ENCODE measurements at regions of chr4 and their contacts with region 1.

Region 1: GRCh38 chr4:101419324-101420135 is 72.2 kb upstream of the PPP3CA start:
- DNase-seq: no peak
- H3K4me3 Mint-ChIP-seq: peak overlapping the region; percentile 1
- H3K27ac Mint-ChIP-seq: peak overlapping the region; percentile 0
- H3K4me1 Mint-ChIP-seq: peaks cover 46% of the 10 kb centered on the region
- H3K27me3 Mint-ChIP-seq: peaks cover 17% of the 10 kb centered on the region

Region 2: DNA sequence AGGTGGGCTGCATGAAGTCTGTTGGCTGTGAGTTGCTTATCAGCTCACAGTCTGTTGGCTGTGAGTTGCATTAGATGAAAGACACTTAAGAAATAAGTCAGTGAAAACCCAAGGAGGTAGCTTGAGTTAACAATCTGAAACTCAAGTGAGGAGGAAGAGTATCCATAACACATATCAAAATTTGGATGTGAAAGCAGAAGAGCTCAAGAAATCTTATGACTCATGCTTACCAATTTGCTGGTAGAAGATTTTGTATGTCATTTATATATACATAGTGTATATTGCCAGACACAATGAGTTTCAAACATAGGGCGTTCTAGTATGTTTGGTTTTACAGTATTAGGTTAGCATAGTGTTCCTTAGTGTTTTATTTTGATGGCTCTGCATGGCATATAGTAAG is 1336.7 kb before region 1 on chr4:
- intact Hi-C with region 1: loop called (anchors 2 kb)
- DNase-seq: no peak
- H3K4me3 Mint-ChIP-seq: no peak overlapping the region
- H3K27ac Mint-ChIP-seq: peak overlapping the region; percentile 68
- H3K4me1 Mint-ChIP-seq: peaks cover 26% of the 10 kb centered on the region
- H3K27me3 Mint-ChIP-seq: no peaks in the 10 kb centered on the region

Region 3: DNA sequence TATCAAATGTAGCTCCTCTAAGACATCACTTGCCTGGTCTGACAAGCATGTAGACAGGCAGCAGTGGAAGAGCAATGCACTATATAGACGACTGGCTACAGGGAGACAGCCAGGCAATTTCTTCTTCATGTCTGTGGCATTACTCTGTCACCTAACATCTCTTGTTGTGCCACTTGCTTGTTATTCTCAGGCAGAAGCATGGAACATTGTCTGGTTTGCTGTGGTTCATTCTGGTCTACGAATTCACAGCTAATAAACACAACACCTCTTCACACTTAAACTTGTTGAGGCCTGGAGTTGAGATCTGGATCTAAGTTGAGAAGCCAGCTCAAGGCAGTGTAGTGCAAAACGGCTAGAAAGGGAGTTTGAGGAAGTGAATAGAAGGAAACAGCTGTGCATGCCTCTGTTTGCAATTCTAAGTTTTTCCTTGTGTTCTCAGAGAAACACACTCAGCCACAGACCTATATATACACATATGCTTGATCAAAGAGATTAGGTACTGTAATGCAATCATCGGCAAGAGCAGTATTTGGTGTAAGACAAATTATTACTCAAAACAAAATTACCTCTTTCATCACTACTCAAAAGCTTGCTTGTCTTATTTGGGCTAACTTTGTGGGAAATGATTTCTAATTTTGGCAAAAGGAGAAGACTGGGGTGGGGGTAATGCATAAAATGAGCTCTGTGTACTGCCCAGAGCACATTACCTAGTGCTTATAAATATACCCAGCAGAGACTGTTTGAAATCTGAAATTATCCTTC is 316.0 kb before region 1 on chr4:
- intact Hi-C with region 1: loop called (anchors 5 kb)
- DNase-seq: no peak
- H3K4me3 Mint-ChIP-seq: peak overlapping the region; percentile 11
- H3K27ac Mint-ChIP-seq: peak overlapping the region; percentile 52
- H3K4me1 Mint-ChIP-seq: peaks cover 25% of the 10 kb centered on the region
- H3K27me3 Mint-ChIP-seq: no peaks in the 10 kb centered on the region

Region 4: GRCh38 chr4:101205916-101206315 is 213.6 kb before region 1 on chr4:
- intact Hi-C with region 1: loop called (anchors 1 kb)
- DNase-seq: peak; percentile 46
- H3K4me3 Mint-ChIP-seq: no peak overlapping the region
- H3K27ac Mint-ChIP-seq: peak overlapping the region; percentile 42
- H3K4me1 Mint-ChIP-seq: peaks cover 30% of the 10 kb centered on the region
- H3K27me3 Mint-ChIP-seq: peaks cover 2% of the 10 kb centered on the region

Region 5: GRCh38 chr4:101328063-101328602 is 91.4 kb before region 1 on chr4:
- intact Hi-C with region 1: loop called (anchors 1 kb)
- DNase-seq: no peak
- H3K4me3 Mint-ChIP-seq: peak overlapping the region; percentile 46
- H3K27ac Mint-ChIP-seq: peak overlapping the region; percentile 88
- H3K4me1 Mint-ChIP-seq: peaks cover 34% of the 10 kb centered on the region
- H3K27me3 Mint-ChIP-seq: peaks cover 24% of the 10 kb centered on the region

Region 6: GRCh38 chr4:101527188-101527587 is 107.7 kb after region 1 on chr4:
- intact Hi-C with region 1: loop called (anchors 1 kb)
- DNase-seq: peak; percentile 32
- H3K4me3 Mint-ChIP-seq: no peak overlapping the region
- H3K27ac Mint-ChIP-seq: no peak overlapping the region
- H3K4me1 Mint-ChIP-seq: peaks cover 21% of the 10 kb centered on the region
- H3K27me3 Mint-ChIP-seq: peaks cover 36% of the 10 kb centered on the region

Measured in activated T-helper 2 cell treated with anti-CD3 and anti-CD28 coated beads, Interferon-gamma antibody, Interleukin-2, Interleukin-4, amounts not matched to agents 10 μg/mL and 5 μg/mL and 100 μg/mL, durations not matched to agents 14 hours and 24 hours and 36 hours (primary cell).